Heart right ventricle (tissue), 16 donors: ENCODE measurements at regions of chr13 and their contacts with region 1.

Region 1: GRCh38 chr13:59531571-59532091 is 632.1 kb downstream of the DIAPH3 start:
- DNase-seq: peak; percentile 81 to 92
- ATAC-seq: peak; percentile 74 to 94 (median 90)
- H3K4me3 ChIP-seq: no peak overlapping the region
- H3K27ac ChIP-seq: peak overlapping the region in 9 of 10 donors; percentile 34 to 81 (median 69)
- H3K4me1 ChIP-seq: peaks cover 0 to 51% (median 29%) of the 10 kb centered on the region in 9 donors
- H3K27me3 ChIP-seq: no peaks in the 10 kb centered on the region
- CTCF ChIP-seq: no peak

Region 2: GRCh38 chr13:59483501-59484145 is 48.0 kb before region 1 on chr13:
- intact Hi-C with region 1: loop called in 1 of 10 experiments (anchors 10 kb)
- DNase-seq: peak in 1 of 2 donors; percentile 30
- ATAC-seq: peak in 7 of 8 donors; percentile 74 to 86 (median 77)
- H3K4me3 ChIP-seq: no peak overlapping the region
- H3K27ac ChIP-seq: peak overlapping the region in 8 of 10 donors; percentile 11 to 69 (median 54)
- H3K4me1 ChIP-seq: peaks cover 2 to 55% (median 28%) of the 10 kb centered on the region in 9 donors
- H3K27me3 ChIP-seq: no peaks in the 10 kb centered on the region
- CTCF ChIP-seq: no peak

Region 3: GRCh38 chr13:59666504-59666903 is 134.9 kb after region 1 on chr13:
- intact Hi-C with region 1: loop called in 1 of 10 experiments (anchors 10 kb)
- DNase-seq: no peak
- ATAC-seq: peak in 6 of 8 donors; percentile 47 to 88 (median 76)
- H3K4me3 ChIP-seq: no peak overlapping the region
- H3K27ac ChIP-seq: peak overlapping the region in 6 of 10 donors; percentile 11 to 78 (median 54)
- H3K4me1 ChIP-seq: peaks cover 0 to 35% (median 13%) of the 10 kb centered on the region in 9 donors
- H3K27me3 ChIP-seq: no peaks in the 10 kb centered on the region
- CTCF ChIP-seq: no peak